ENCODE measurements at regions of chr19 and their contacts with region 1.

Region 1: GRCh38 chr19:42280192-42281145 is 11.4 kb downstream of the CIC start:
- DNase-seq: peak; percentile 97
- H3K4me3 ChIP-seq: peak overlapping the region; percentile 70
- H3K27ac ChIP-seq: peak overlapping the region; percentile 91
- H3K4me1 ChIP-seq: peaks cover 52% of the 10 kb centered on the region
- H3K27me3 ChIP-seq: no peaks in the 10 kb centered on the region
- CTCF ChIP-seq: no peak

Region 2: GRCh38 chr19:41112728-41113290 is 1167.7 kb before region 1 on chr19:
- CTCF ChIA-PET with region 1: no interaction called
- POLR2A ChIA-PET with region 1: no interaction called
- intact Hi-C with region 1: no loop called
- DNase-seq: no peak
- H3K4me3 ChIP-seq: no peak overlapping the region
- H3K27ac ChIP-seq: no peak overlapping the region
- H3K4me1 ChIP-seq: no peaks in the 10 kb centered on the region
- H3K27me3 ChIP-seq: no peaks in the 10 kb centered on the region
- CTCF ChIP-seq: no peak

Region 3: DNA sequence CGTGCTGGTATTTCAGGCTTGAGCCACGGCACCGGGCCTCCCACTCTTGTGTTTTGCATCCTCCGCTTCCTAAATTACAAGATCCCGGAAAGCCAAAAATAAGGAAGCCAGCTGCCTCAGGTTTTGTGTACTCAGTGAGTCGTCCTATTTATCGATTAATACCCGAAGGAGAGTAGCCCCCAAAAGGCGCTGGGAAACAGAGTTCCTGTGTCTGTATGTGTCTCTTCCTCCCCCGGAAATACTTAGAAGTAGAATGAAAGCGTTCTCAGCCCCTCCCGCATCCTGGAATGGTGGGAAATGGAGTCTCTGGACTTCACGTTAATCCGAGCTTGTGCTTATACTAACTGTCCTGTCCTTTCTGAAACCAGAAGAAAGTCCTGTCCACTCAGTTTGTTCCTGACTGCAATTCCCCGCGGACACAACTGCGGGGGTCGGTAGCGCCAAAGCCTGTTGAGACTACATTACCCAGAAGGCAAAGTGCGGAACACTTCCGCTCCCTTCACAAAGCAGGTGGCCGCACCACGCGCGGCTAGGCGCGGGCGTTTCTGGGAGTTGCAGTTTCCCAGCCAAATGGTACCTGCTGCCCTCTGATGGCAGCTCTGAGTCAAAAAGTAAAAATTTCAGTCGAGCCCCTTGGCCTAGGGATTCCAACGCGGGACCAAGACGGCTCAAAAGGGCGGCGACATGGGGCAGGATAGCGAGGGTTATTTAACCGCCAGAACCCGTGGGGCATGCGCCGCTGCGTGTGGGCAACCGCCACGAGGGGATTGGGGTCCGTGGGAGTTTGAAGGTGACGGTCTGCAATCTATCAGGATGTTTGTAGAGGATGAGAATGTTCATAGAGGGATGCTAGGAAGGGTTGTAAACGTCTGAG is 35.9 kb before region 1 on chr19:
- CTCF ChIA-PET with region 1: interaction called, 27 read pairs
- POLR2A ChIA-PET with region 1: no interaction called
- intact Hi-C with region 1: loop called (anchors 1 kb)
- DNase-seq: peak; percentile 98
- H3K4me3 ChIP-seq: peak overlapping the region; percentile 72
- H3K27ac ChIP-seq: peak overlapping the region; percentile 82
- H3K4me1 ChIP-seq: peaks cover 40% of the 10 kb centered on the region
- H3K27me3 ChIP-seq: no peaks in the 10 kb centered on the region
- CTCF ChIP-seq: peak; percentile 79

Region 4: GRCh38 chr19:42254989-42255765 is 25.3 kb before region 1 on chr19 and contains the start of gene ERF:
- CTCF ChIA-PET with region 1: interaction called, 12 read pairs
- POLR2A ChIA-PET with region 1: interaction called, 4 read pairs
- intact Hi-C with region 1: loop called (anchors 2 kb)
- DNase-seq: peak; percentile 95
- H3K4me3 ChIP-seq: peak within 1 kb of the TSS; percentile 91
- H3K27ac ChIP-seq: peak within 1 kb of the TSS; percentile 95
- H3K4me1 ChIP-seq: peaks cover 34% of the 10 kb centered on the region
- H3K27me3 ChIP-seq: no peaks in the 10 kb centered on the region
- CTCF ChIP-seq: no peak
- total RNA-seq, gene ERF: 149 and 164 TPM in 2 replicates

Region 5: GRCh38 chr19:42268704-42269477 is 11.6 kb before region 1 on chr19 and contains the start of gene CIC:
- CTCF ChIA-PET with region 1: interaction called, 12 read pairs
- POLR2A ChIA-PET with region 1: interaction called, 6 read pairs
- intact Hi-C with region 1: no loop called
- DNase-seq: peak; percentile 100
- H3K4me3 ChIP-seq: peak within 1 kb of the TSS; percentile 62
- H3K27ac ChIP-seq: peak within 1 kb of the TSS; percentile 99
- H3K4me1 ChIP-seq: peaks cover 18% of the 10 kb centered on the region
- H3K27me3 ChIP-seq: no peaks in the 10 kb centered on the region
- CTCF ChIP-seq: no peak
- total RNA-seq, gene CIC: 75.8 and 80.3 TPM in 2 replicates

Region 6: GRCh38 chr19:42396381-42397262 is 116.2 kb after region 1 on chr19:
- CTCF ChIA-PET with region 1: no interaction called
- POLR2A ChIA-PET with region 1: no interaction called
- intact Hi-C with region 1: no loop called
- DNase-seq: peak; percentile 99
- H3K4me3 ChIP-seq: peak overlapping the region; percentile 56
- H3K27ac ChIP-seq: peak overlapping the region; percentile 81
- H3K4me1 ChIP-seq: peaks cover 10% of the 10 kb centered on the region
- H3K27me3 ChIP-seq: peaks cover 5% of the 10 kb centered on the region
- CTCF ChIP-seq: no peak